Adrenal gland (tissue), 19 donors: ENCODE measurements at regions of chr9 and their contacts with region 1.

Region 1: DNA sequence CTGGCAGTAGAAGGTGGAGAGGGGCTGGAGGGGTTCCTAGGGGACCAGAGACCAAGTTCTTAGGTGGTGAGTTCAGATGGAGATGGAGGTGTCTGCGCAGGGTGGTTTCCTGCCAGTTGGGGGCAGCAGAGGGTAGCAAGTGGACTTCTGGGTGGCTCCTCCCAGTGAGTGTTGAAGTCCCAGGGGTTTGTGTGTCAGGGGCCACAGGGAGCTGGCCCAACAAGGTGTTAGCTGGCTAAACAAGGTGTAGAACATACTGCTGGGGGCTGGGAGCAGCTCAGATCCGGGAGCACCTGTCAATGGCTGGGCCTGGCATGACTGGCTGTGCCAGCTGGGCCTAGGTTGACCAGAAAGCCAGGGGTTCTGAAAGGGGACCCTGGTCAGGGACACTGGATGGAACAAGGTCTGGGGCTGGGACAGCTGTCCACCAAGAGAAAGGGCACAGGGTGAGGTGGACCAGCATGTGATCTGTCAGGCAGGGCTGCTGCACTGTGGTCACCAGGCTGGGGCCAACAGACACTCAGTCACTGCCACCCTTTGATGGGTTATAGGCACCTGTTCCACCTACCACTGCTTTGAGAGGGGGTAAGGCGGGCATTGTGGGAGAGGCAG is 35.6 kb downstream of the DAB2IP start:
- DNase-seq: peak; percentile 65 to 93 (median 83)
- H3K4me3 ChIP-seq: no peak overlapping the region
- H3K27ac ChIP-seq: no peak overlapping the region
- H3K4me1 ChIP-seq: peaks cover 0 to 4% of the 10 kb centered on the region in 2 donors
- H3K27me3 ChIP-seq: no peaks in the 10 kb centered on the region
- CTCF ChIP-seq: peak; percentile 76 to 88 (median 84)
- POLR2A ChIP-seq: no peak

Region 2: DNA sequence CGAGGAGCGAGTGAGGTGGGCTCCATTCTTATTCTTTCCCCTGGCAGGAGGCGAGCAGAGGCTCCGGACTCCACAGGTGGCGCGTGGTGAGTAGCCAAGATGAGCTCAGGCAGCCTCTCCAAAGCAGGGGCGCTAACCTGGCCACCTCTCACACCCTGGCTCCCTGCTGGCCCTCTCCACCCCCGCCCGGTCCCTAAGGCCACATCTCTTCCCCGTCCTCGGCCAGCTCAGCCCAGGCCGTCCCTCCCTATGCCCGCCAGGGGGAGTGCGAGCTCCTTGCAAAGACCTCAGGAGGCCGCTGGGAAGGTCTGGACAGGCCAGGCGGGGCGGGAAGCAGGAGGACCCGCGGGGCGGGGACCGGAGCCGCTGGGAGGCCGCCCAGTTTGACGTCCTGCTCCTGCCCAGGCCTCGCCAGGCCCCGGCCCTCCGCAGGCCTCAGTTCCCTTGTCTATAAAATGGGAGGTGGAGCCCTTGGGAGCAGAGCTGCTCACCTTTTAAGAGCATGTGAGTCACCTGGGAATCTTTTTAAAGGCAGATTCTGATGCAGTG is 141.1 kb before region 1 on chr9:
- intact Hi-C with region 1: loop called (anchors 2 to 10 kb)
- DNase-seq: peak; percentile 95 to 99 (median 97)
- H3K4me3 ChIP-seq: peak overlapping the region in 1 of 4 donors; percentile 24
- H3K27ac ChIP-seq: no peak overlapping the region
- H3K4me1 ChIP-seq: peaks cover 7 to 17% of the 10 kb centered on the region in 2 donors
- H3K27me3 ChIP-seq: no peaks in the 10 kb centered on the region
- CTCF ChIP-seq: peak; percentile 94 to 99 (median 96)
- POLR2A ChIP-seq: no peak

Region 3: DNA sequence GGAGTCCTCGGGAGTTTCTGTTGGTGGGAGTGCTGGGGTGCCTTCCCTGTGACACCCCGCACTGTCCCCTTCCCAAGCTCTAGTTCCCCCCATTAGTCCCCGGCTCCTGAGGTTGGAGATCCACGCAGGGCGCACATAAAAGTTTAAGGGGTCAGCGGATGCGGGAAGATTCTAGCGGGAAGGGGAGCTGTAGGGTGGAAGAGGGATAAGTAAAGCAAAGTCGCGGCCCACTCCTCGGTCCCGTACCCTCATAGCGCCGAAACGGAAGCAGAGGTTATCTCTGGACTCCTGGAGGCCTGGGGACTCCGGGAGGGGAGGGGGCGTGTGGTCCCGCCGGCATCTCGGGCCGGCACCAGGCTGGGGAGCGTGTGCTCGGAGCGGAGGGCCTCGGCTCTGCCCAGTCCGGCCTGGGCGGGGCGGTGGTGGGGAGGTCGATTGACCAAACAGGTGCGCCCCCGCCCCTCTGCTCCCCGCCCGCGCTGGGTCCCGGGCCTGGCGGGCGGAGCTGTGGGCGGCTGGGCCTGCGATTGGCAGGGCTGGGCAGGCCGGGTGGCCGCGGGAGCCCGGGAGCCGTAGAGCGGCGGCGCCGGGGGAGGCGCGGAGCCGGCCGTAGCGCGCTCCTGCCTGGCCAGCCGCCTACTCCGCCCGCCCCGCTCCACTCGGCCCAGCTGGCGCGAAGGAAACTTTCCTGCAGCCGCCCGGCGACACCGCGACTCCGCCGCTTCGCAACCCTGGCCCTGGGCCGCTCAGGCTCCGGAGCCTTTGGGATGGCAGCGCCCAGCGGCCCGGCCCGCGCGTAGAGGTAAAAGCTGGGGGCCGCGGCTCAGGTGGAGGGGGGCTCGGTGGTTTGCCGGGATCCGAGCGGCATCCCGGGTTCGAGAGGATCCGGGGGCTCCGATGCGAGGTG is 87.8 kb before region 1 on chr9:
- intact Hi-C with region 1: no loop called
- DNase-seq: peak; percentile 71 to 83 (median 78)
- H3K4me3 ChIP-seq: peak overlapping the region in 3 of 4 donors; percentile 23 to 81 (median 24)
- H3K27ac ChIP-seq: peak overlapping the region in 4 of 5 donors; percentile 13 to 89 (median 72)
- H3K4me1 ChIP-seq: peaks cover 19 to 29% of the 10 kb centered on the region in 2 donors
- H3K27me3 ChIP-seq: no peaks in the 10 kb centered on the region
- CTCF ChIP-seq: no peak
- POLR2A ChIP-seq: peak; percentile 41 to 49

Region 4: DNA sequence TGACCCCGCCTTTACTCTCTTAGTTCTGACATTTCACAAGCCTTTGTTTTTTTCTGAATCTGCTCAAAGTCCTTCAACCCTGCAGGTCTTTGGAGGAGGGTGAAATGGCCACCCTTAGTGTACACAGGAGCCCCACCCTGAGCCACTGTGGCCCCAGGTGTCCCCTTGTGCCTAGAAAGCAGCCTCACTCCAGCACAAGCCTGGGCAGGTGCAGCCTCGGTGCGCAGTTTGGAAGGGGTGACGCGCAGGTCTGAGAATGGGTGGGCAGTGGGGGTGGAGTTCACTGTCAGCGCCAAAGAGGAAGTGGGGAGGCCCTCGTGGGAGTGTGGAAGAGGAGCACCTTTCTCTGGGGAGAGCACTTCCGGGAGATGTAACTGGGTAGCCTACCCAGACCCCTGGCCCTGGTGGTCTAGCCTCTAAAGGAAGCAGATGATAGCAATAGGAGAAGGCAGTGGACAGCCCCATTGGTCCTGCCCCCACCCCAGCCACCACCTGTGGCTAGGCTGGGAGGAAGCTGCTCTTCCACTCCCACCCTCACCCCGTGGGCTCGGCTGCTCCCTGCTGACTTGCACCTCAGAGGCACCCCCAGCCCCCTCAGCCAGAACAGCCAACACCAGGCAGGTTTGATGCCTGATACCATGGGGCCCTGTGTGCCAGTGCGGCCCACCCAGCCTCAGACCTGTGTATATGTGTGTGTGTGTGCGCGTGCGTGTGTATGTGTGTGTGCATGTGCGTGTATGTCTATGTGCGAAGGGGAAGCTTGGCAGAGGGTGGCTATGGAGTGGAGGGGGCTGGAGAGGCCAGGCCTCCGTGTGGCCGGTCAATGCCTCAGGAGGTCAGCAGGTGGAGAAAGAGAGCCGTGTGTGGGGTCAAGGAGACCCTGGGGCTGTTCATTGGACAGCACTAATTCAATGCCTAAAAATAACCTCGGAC is 52.4 kb before region 1 on chr9:
- intact Hi-C with region 1: loop called in 1 of 2 experiments (anchors 5 kb)
- DNase-seq: peak in 1 of 7 donors; percentile 26
- H3K4me3 ChIP-seq: no peak overlapping the region
- H3K27ac ChIP-seq: no peak overlapping the region
- H3K4me1 ChIP-seq: peaks cover 9 to 13% of the 10 kb centered on the region in 2 donors
- H3K27me3 ChIP-seq: no peaks in the 10 kb centered on the region
- CTCF ChIP-seq: peak in 5 of 6 experiments; percentile 22 to 46 (median 38)
- POLR2A ChIP-seq: no peak

Region 5: DNA sequence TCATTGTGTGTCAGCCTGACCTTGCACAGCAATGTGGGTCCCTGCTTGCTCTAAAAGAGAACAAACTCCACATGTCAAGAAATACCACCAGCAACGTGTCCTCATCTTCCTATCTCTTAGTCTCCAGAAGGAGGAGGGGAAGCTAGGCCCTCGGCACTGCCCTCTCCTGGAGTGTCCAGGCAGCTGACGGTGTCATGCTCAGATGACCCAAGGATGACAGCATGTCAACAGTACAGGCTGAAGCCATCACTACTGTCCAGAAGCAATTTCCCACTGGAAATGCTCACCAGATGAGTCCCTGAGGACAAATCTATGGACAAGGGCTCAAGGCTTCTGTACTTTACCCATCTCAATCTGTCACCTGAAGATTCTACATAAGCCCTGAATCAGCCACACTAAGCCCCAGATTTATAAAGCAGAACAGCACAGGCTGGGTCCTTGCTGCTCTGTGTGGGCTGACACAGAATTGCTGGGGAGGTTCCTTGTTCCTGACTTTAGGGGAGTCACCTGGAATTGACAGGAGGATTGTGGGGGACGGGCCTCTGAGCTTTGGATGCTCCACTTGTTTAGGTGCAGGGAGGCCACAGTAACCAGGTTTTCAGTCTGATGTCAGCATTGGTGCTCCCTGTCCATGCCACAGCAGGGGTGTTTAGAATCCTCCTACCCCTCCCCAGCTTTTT is 174.6 kb after region 1 on chr9:
- intact Hi-C with region 1: loop called in 1 of 2 experiments (anchors 10 kb)
- DNase-seq: peak; percentile 35 to 88 (median 70)
- H3K4me3 ChIP-seq: no peak overlapping the region
- H3K27ac ChIP-seq: peak overlapping the region in 1 of 5 donors; percentile 3
- H3K4me1 ChIP-seq: no peaks in the 10 kb centered on the region
- H3K27me3 ChIP-seq: no peaks in the 10 kb centered on the region
- CTCF ChIP-seq: peak; percentile 30 to 70 (median 57)
- POLR2A ChIP-seq: no peak

Region 6: GRCh38 chr9:121992571-121993212 is 305.7 kb after region 1 on chr9:
- intact Hi-C with region 1: loop called in 1 of 2 experiments (anchors 10 kb)
- DNase-seq: peak; percentile 52 to 85 (median 67)
- H3K4me3 ChIP-seq: no peak overlapping the region
- H3K27ac ChIP-seq: no peak overlapping the region
- H3K4me1 ChIP-seq: no peaks in the 10 kb centered on the region
- H3K27me3 ChIP-seq: no peaks in the 10 kb centered on the region
- CTCF ChIP-seq: peak; percentile 74 to 93 (median 83)
- POLR2A ChIP-seq: no peak

Region 7: GRCh38 chr9:122016744-122017143 is 329.7 kb after region 1 on chr9:
- intact Hi-C with region 1: no loop called
- DNase-seq: peak in 1 of 7 donors; percentile 26
- H3K4me3 ChIP-seq: no peak overlapping the region
- H3K27ac ChIP-seq: peak overlapping the region in 1 of 5 donors; percentile 15
- H3K4me1 ChIP-seq: peaks cover 0 to 13% of the 10 kb centered on the region in 2 donors
- H3K27me3 ChIP-seq: no peaks in the 10 kb centered on the region
- CTCF ChIP-seq: no peak
- POLR2A ChIP-seq: no peak